Breast epithelium (tissue), 4 donors: ENCODE measurements at regions of chr5 and their contacts with region 1.

Region 1: DNA sequence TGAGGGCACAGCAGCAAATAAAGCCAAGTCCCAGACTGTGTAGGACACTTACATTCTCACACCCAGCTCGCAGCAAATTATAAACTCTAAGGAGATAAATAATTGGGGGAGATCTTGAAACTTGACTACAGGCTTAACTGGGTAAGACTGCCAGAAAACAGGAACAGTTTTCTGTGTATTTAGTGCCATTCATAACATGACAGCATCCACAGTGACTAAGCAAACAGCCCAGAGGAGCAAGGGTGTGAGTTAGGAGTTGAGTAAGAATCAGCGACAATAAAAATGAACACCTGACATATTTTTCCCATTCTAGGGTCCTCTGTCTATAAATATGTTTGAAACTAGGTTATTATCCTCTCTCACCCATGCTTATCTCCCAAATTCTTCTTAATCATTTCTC is 370.9 kb upstream of the WWC1 start:
- DNase-seq: no peak
- H3K4me3 ChIP-seq: no peak overlapping the region
- H3K27ac ChIP-seq: no peak overlapping the region
- H3K4me1 ChIP-seq: no peaks in the 10 kb centered on the region
- H3K27me3 ChIP-seq: no peaks in the 10 kb centered on the region
- CTCF ChIP-seq: no peak
- POLR2A ChIP-seq: no peak

Region 2: GRCh38 chr5:167819406-167819805 is 101.2 kb before region 1 on chr5:
- intact Hi-C with region 1: no loop called
- DNase-seq: peak in 1 of 2 donors; percentile 40
- H3K4me3 ChIP-seq: no peak overlapping the region
- H3K27ac ChIP-seq: peak overlapping the region; percentile 72 to 82
- H3K4me1 ChIP-seq: no peaks in the 10 kb centered on the region
- H3K27me3 ChIP-seq: no peaks in the 10 kb centered on the region
- CTCF ChIP-seq: no peak
- POLR2A ChIP-seq: no peak

Region 3: GRCh38 chr5:168734620-168735300 is 814.2 kb after region 1 on chr5:
- intact Hi-C with region 1: loop called (anchors 5 kb)
- DNase-seq: no peak
- H3K4me3 ChIP-seq: no peak overlapping the region
- H3K27ac ChIP-seq: peak overlapping the region in 1 of 2 donors; percentile 19
- H3K4me1 ChIP-seq: no peaks in the 10 kb centered on the region
- H3K27me3 ChIP-seq: no peaks in the 10 kb centered on the region
- CTCF ChIP-seq: no peak
- POLR2A ChIP-seq: no peak